ENCODE measurements at regions of chr17 and their contacts with region 1.

Region 1: DNA sequence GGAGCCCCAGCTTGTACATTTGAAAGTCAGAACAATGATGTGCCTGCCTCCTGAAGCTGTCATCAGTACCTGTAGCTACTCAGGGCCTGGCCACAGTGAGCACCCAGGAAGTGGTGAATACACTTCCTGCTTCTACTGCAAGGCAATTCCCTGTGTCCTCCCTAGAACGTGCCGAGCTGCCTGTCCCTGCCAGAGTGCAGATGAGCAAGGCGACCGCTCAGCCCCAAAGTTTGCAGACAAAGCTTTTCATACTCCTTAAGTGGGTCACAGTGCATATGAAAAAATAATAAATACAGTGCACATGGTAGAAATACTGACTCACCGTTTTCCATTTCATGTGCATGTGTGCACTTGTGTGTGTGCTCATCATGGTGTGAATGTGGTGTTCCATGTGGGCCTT is 77.3 kb downstream of the MPRIP start:
- DNase-seq: peak; percentile 82
- H3K4me3 Mint-ChIP-seq: peak overlapping the region; percentile 7
- H3K27ac Mint-ChIP-seq: peak overlapping the region; percentile 84
- H3K4me1 Mint-ChIP-seq: peaks cover 69% of the 10 kb centered on the region
- H3K27me3 Mint-ChIP-seq: no peaks in the 10 kb centered on the region

Region 2: GRCh38 chr17:17016199-17016866 is 103.2 kb before region 1 on chr17:
- CTCF ChIA-PET with region 1: no interaction called
- POLR2A ChIA-PET with region 1: no interaction called
- intact Hi-C with region 1: loop called (anchors 10 kb)
- DNase-seq: no peak
- H3K4me3 Mint-ChIP-seq: no peak overlapping the region
- H3K27ac Mint-ChIP-seq: peak overlapping the region; percentile 38
- H3K4me1 Mint-ChIP-seq: peaks cover 35% of the 10 kb centered on the region
- H3K27me3 Mint-ChIP-seq: no peaks in the 10 kb centered on the region

Region 3: DNA sequence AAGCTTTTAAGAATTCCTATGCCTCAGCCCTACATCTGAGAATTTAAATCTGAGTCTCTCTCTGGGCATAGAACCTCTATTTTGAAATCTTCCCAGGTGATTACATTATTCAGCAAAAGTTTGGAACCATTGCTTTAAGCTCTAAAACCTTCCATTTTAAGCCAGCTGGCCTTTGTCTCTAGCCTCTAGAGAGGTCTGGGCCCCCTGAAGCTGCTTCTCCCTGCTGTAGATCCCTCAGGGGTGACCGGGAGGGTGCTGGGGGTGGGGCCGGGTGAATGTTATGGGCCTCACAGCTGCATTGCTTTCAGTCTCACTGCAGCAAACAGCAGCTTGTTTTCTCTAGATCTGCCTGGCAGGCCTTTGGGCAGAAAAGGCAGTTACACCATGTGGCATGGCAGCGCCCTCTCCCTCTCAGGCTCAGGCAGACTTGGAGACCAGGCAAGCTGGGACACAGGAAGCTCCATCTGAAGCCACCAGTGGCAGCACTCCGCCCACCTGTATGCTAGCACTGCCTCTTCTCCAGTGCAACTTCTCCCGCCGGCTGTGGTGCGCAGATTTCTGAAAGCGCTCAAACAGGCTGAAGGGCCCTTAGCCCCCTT is 11.0 kb before region 1 on chr17:
- CTCF ChIA-PET with region 1: interaction called, 18 read pairs
- POLR2A ChIA-PET with region 1: interaction called, 5 read pairs
- intact Hi-C with region 1: no loop called
- DNase-seq: no peak
- H3K4me3 Mint-ChIP-seq: no peak overlapping the region
- H3K27ac Mint-ChIP-seq: peak overlapping the region; percentile 39
- H3K4me1 Mint-ChIP-seq: peaks cover 51% of the 10 kb centered on the region
- H3K27me3 Mint-ChIP-seq: no peaks in the 10 kb centered on the region

Region 4: DNA sequence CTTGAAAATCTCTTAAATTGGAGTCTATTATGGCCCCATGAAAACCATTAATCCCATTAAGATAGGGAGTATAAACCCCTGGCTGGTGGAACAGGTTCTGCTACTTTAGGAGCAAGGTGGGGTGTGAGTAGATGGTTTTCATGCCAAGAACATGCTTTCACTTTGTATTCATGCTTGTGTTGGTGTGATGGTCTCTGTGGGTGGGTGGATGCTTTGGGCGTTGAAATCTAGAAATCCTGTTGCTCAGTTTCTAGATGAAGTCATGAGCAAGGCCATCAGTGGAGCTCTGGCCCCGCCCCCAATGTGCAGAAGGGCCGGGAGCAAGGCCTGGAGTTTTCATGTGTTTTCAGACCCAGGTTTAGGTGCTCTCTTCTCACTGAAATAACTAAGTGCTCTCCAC is 66.5 kb after region 1 on chr17:
- CTCF ChIA-PET with region 1: no interaction called
- POLR2A ChIA-PET with region 1: no interaction called
- intact Hi-C with region 1: loop called (anchors 10 kb)
- DNase-seq: peak; percentile 85
- H3K4me3 Mint-ChIP-seq: peak overlapping the region; percentile 16
- H3K27ac Mint-ChIP-seq: peak overlapping the region; percentile 81
- H3K4me1 Mint-ChIP-seq: peaks cover 52% of the 10 kb centered on the region
- H3K27me3 Mint-ChIP-seq: no peaks in the 10 kb centered on the region